Body of pancreas (tissue), 4 donors: ENCODE measurements at regions of chr1 and their contacts with region 1.

Region 1: GRCh38 chr1:179706339-179706941 is 36.7 kb upstream of the FAM163A start:
- DNase-seq: peak; percentile 55 to 64 (median 61)
- ATAC-seq: no peak
- H3K4me3 ChIP-seq: no peak overlapping the region
- H3K27ac ChIP-seq: no peak overlapping the region
- H3K4me1 ChIP-seq: peaks cover 12% of the 10 kb centered on the region
- H3K27me3 ChIP-seq: no peaks in the 10 kb centered on the region
- CTCF ChIP-seq: peak; percentile 64 to 85 (median 78)
- POLR2A ChIP-seq: no peak

Region 2: GRCh38 chr1:179809506-179810366 is 103.3 kb after region 1 on chr1:
- intact Hi-C with region 1: loop called (anchors 5 kb)
- DNase-seq: peak; percentile 65 to 69 (median 66)
- ATAC-seq: peak; percentile 54
- H3K4me3 ChIP-seq: no peak overlapping the region
- H3K27ac ChIP-seq: no peak overlapping the region
- H3K4me1 ChIP-seq: peaks cover 7% of the 10 kb centered on the region
- H3K27me3 ChIP-seq: no peaks in the 10 kb centered on the region
- CTCF ChIP-seq: peak; percentile 78 to 88 (median 85)
- POLR2A ChIP-seq: no peak

Region 3: GRCh38 chr1:179867807-179868330 is 161.4 kb after region 1 on chr1:
- intact Hi-C with region 1: no loop called
- DNase-seq: peak; percentile 45 to 76 (median 66)
- ATAC-seq: peak; percentile 71
- H3K4me3 ChIP-seq: no peak overlapping the region
- H3K27ac ChIP-seq: no peak overlapping the region
- H3K4me1 ChIP-seq: peaks cover 40% of the 10 kb centered on the region
- H3K27me3 ChIP-seq: no peaks in the 10 kb centered on the region
- CTCF ChIP-seq: peak; percentile 53 to 75 (median 66)
- POLR2A ChIP-seq: no peak

Region 4: DNA sequence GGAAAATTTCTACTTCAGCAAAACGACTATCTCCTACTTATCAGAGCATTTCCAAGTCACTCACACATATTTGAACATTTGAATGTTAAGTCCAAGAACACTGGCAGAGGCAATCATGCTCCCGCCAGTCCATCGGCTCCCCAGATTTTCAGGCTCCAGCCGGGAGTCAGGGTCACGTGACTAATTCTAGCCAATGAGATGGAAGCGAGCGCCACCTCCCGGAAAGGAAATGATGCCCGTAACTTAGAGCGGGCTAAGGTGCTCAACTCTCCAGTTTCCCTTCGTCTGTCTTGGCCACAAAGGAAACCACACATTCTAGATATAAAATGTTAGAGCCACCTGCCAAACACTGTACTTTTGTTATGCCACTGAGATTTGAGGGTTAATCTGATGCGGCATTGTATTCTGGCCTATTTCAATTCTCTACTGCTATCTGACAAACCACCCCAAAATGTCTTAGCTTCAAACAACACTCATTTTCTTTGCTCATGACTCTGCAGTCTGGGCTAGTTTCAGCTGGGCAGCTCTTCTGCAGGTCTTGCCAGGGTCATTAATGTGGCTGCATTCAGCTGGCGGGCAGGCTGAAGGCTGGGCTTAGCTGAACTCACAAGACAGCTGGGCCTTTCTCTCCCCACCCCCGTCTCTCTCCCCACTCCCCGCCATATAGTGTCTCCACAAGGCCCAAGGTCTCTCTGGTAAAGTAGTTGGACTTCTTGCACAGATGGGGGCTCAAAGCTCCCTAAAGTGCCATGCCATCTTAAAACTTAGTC is 507.1 kb after region 1 on chr1:
- intact Hi-C with region 1: no loop called
- DNase-seq: no peak
- ATAC-seq: no peak
- H3K4me3 ChIP-seq: no peak overlapping the region
- H3K27ac ChIP-seq: no peak overlapping the region
- H3K4me1 ChIP-seq: no peaks in the 10 kb centered on the region
- H3K27me3 ChIP-seq: no peaks in the 10 kb centered on the region
- CTCF ChIP-seq: no peak
- POLR2A ChIP-seq: no peak